ENCODE measurements at regions of chr15 and their contacts with region 1.

Region 1: GRCh38 chr15:51688863-51689262 is 7.6 kb downstream of the SCG3 start:
- DNase-seq: no peak
- ATAC-seq: no peak
- H3K4me3 Mint-ChIP-seq: no peak overlapping the region
- H3K27ac Mint-ChIP-seq: no peak overlapping the region
- H3K4me1 Mint-ChIP-seq: peaks cover 10% of the 10 kb centered on the region
- H3K27me3 Mint-ChIP-seq: peaks cover 22% of the 10 kb centered on the region
- CTCF ChIP-seq: no peak

Region 2: DNA sequence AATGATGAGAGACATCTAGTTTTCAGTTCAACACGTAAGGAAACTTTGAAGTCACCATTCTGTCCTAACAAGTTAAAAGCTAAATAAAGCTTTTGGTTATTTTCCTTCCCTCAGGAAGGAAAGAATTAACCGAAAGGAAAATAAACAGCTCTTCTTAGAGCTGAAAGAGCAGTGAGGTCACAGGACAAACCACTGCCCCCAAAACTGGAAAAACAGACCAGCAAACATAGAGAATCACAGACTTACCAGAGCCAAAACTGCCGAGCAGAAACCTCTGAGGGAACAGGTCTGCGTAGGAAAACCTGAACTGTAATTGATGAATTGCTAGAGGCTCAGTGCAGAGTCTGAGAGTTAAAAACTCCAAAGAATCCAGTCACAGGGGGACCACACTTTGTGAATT is 1157.1 kb before region 1 on chr15:
- CTCF ChIA-PET with region 1: no interaction called
- POLR2A ChIA-PET with region 1: no interaction called
- intact Hi-C with region 1: no loop called
- DNase-seq: no peak
- ATAC-seq: no peak
- H3K4me3 Mint-ChIP-seq: no peak overlapping the region
- H3K27ac Mint-ChIP-seq: peak overlapping the region; percentile 47
- H3K4me1 Mint-ChIP-seq: peaks cover 8% of the 10 kb centered on the region
- H3K27me3 Mint-ChIP-seq: peaks cover 1% of the 10 kb centered on the region
- CTCF ChIP-seq: no peak

Region 3: GRCh38 chr15:51672155-51672687 is 16.6 kb before region 1 on chr15:
- CTCF ChIA-PET with region 1: no interaction called
- POLR2A ChIA-PET with region 1: no interaction called
- intact Hi-C with region 1: no loop called
- DNase-seq: no peak
- ATAC-seq: no peak
- H3K4me3 Mint-ChIP-seq: no peak overlapping the region
- H3K27ac Mint-ChIP-seq: no peak overlapping the region
- H3K4me1 Mint-ChIP-seq: no peaks in the 10 kb centered on the region
- H3K27me3 Mint-ChIP-seq: peaks cover 13% of the 10 kb centered on the region
- CTCF ChIP-seq: no peak

Region 4: GRCh38 chr15:51731549-51732267 is 42.8 kb after region 1 on chr15:
- CTCF ChIA-PET with region 1: interaction called, 3 read pairs
- POLR2A ChIA-PET with region 1: no interaction called
- intact Hi-C with region 1: loop called (anchors 5 kb)
- DNase-seq: peak; percentile 46
- ATAC-seq: peak; percentile 37
- H3K4me3 Mint-ChIP-seq: peak overlapping the region; percentile 69
- H3K27ac Mint-ChIP-seq: peak overlapping the region; percentile 89
- H3K4me1 Mint-ChIP-seq: peaks cover 82% of the 10 kb centered on the region
- H3K27me3 Mint-ChIP-seq: no peaks in the 10 kb centered on the region
- CTCF ChIP-seq: no peak